Sigmoid colon (tissue), 7 donors: ENCODE measurements at regions of chr14 and their contacts with region 1.

Region 1: DNA sequence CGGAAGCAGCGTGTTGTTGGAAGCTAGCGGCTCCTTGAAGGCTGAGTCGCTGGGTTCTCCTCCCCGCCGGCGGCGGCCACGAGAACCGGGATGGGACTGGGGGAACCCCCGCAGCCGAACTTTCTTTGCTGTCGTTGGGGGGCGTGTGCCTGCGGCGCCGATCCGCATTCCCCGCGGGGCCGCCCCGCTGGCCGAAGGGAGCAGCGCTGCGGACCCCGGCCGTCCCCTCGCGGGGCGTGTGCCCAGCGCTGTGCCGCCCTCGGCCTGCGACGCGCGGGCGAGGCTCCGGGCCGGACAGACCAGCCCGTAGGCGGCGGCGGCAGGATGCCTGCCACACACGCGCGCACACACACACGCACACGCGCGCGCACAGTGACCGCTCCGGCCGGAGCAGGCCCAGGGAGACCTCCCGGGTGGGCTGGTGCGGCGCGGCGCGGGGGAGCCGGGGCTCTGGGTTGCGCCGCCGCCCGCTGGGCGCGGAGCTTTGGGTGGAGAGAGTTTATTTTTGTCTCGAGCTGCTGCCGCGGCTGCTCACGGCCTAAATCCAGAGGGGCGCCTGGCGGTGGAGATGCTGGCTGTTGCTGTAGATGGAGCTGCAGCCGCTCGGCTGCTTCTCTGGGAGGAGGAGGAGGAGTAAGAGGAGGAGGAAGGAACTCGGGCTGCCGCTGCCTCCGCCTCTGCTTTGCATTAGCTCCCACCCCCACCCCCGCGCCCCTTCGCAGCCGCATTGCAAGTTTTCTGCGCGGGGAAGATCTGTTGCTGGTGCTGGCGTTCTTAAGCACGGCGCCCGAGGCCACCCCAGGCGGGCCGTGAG is at the start of gene SAMD4A:
- DNase-seq: peak; percentile 94
- H3K4me3 ChIP-seq: peak within 1 kb of the TSS; percentile 50 to 93 (median 74)
- H3K27ac ChIP-seq: peak within 1 kb of the TSS; percentile 94 to 100 (median 98)
- H3K4me1 ChIP-seq: peaks cover 0 to 42% (median 28%) of the 10 kb centered on the region in 4 donors
- H3K27me3 ChIP-seq: no peaks in the 10 kb centered on the region
- CTCF ChIP-seq: peak in 3 of 4 experiments; percentile 21 to 47 (median 32)
- EP300 ChIP-seq: no peak
- POLR2A ChIP-seq: peak; percentile 38 to 73
- total RNA-seq, gene SAMD4A: 79.8 to 135 (median 105) TPM

Region 2: DNA sequence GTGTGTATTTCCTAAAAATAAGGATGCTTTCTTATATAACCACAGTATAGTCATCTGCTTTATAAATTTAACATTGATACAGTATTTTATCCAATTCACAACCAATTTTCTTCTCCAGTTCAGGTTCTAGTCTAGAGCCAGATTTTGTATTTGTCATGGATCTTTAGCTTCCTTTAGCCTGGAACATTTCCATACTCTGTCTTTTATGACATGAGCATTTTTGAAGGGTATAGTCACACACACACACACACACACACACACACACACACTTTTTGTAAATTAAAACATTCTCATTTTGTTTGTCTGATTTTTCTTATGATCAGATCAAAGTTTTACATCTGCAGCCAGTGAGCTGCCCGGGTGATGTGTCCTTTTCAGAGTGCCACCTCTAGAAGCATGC is 31.5 kb before region 1 on chr14:
- intact Hi-C with region 1: no loop called
- DNase-seq: no peak
- H3K4me3 ChIP-seq: no peak overlapping the region
- H3K27ac ChIP-seq: no peak overlapping the region
- H3K4me1 ChIP-seq: peaks cover 0 to 2% (median under 1%) of the 10 kb centered on the region in 4 donors
- H3K27me3 ChIP-seq: no peaks in the 10 kb centered on the region
- CTCF ChIP-seq: no peak
- EP300 ChIP-seq: no peak
- POLR2A ChIP-seq: no peak

Region 3: GRCh38 chr14:54549862-54550261 is 16.8 kb before region 1 on chr14:
- intact Hi-C with region 1: no loop called
- DNase-seq: no peak
- H3K4me3 ChIP-seq: no peak overlapping the region
- H3K27ac ChIP-seq: no peak overlapping the region
- H3K4me1 ChIP-seq: peaks cover 0 to 2% (median 0%) of the 10 kb centered on the region in 4 donors
- H3K27me3 ChIP-seq: no peaks in the 10 kb centered on the region
- CTCF ChIP-seq: no peak
- EP300 ChIP-seq: no peak
- POLR2A ChIP-seq: no peak

Region 4: DNA sequence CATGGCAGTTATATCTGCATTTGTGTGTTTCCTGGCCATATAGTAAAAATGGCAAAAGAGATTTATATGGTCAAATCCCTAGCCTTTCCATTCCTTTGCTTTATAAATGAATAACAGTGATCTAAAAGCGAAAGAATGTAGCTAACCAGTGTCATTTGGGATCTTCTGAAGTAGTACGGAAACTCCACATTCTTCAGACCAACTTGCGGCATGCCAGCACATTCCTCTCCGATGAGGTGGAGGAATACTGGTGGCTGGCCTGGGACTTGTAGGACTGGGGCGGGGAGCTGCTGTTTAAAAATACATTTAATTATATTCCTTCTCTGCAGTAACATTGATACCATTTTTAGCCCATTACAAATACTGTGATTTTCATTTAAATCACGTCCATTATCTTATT is 85.6 kb after region 1 on chr14:
- intact Hi-C with region 1: loop called (anchors 1 kb)
- DNase-seq: peak; percentile 97
- H3K4me3 ChIP-seq: peak overlapping the region; percentile 7 to 32 (median 18)
- H3K27ac ChIP-seq: peak overlapping the region; percentile 83 to 96 (median 86)
- H3K4me1 ChIP-seq: peaks cover 0 to 69% (median 60%) of the 10 kb centered on the region in 4 donors
- H3K27me3 ChIP-seq: no peaks in the 10 kb centered on the region
- CTCF ChIP-seq: no peak
- EP300 ChIP-seq: peak in 3 of 4 donors; percentile 18 to 64 (median 63)
- POLR2A ChIP-seq: no peak

Region 5: DNA sequence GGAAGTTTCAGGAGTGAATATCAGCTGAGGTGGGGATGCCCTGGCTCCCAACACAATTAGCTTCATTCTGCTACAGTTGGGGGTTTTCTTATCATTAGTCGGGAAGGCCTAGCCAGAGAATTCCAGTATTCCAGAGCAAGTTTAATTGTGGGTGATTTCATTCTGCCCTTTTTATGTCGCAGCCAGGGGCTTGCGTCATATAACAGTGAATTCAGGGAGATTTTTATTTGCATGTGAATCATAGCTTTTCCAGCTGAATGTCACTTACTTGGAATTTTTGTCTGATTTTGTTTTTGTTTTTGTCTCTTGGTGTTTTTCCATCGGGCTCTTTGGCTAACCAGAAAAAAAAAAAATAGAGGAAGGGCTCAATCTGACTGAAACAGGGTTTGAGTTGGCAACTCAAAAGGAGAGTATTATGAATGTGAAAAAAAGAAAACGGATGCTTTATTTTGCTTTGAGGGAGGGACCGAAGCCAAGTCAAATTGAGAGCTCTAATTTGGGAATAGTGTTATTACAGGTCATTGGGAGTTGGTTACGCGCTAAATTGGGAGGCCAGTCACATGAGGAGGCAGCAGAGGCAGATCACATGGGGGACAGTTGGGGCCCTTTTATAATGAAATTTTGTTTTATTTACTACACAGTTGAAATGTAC is 119.7 kb after region 1 on chr14:
- intact Hi-C with region 1: loop called (anchors 1 kb)
- DNase-seq: peak; percentile 87
- H3K4me3 ChIP-seq: no peak overlapping the region
- H3K27ac ChIP-seq: peak overlapping the region; percentile 73 to 95 (median 82)
- H3K4me1 ChIP-seq: peaks cover 0 to 78% (median 72%) of the 10 kb centered on the region in 4 donors
- H3K27me3 ChIP-seq: no peaks in the 10 kb centered on the region
- CTCF ChIP-seq: no peak
- EP300 ChIP-seq: peak in 1 of 4 donors; percentile 51
- POLR2A ChIP-seq: no peak

Region 6: DNA sequence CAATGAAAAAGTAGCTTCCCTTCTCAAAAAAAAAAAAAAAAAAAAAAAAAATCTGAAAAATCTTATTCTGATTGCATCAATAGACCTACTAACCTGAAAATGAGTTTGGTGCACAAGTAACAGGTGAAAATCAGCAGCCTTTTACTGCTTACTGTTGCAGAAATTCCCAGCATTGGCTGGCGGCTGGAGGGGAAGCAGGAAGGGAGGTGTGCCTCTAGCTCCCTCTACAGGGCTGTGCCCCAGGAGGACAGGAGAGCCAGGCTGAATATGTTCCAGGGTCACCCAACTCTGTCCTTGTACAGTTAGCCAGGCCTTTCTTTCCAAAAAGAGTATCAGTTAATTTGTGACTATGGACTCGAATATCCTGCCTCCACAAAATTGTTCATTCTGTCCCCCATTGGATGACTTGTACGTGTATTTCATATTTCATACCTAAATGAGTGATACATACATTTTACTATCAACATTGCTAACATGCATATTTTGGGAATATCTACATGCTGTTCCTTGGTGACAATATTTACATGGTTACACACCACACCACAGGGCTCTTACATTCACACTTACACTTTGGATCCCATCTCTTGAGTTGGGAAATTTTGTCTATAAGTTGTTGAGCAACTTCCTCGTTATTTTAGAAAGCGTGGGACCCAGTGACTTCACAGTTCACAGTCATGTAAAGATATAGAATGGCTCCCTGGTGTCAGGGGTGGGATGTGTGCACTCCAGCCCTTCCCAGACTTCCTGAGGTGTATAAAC is 125.1 kb after region 1 on chr14:
- intact Hi-C with region 1: loop called (anchors 1 kb)
- DNase-seq: peak; percentile 92
- H3K4me3 ChIP-seq: no peak overlapping the region
- H3K27ac ChIP-seq: peak overlapping the region; percentile 24 to 95 (median 57)
- H3K4me1 ChIP-seq: peaks cover 0 to 40% (median 36%) of the 10 kb centered on the region in 4 donors
- H3K27me3 ChIP-seq: no peaks in the 10 kb centered on the region
- CTCF ChIP-seq: peak; percentile 74 to 82 (median 82)
- EP300 ChIP-seq: no peak
- POLR2A ChIP-seq: no peak

Region 7: GRCh38 chr14:54773171-54773975 is 206.8 kb after region 1 on chr14:
- intact Hi-C with region 1: loop called (anchors 1 kb)
- DNase-seq: peak; percentile 96
- H3K4me3 ChIP-seq: no peak overlapping the region
- H3K27ac ChIP-seq: peak overlapping the region; percentile 78 to 91 (median 87)
- H3K4me1 ChIP-seq: peaks cover 0 to 71% (median 52%) of the 10 kb centered on the region in 4 donors
- H3K27me3 ChIP-seq: no peaks in the 10 kb centered on the region
- CTCF ChIP-seq: peak; percentile 53 to 91 (median 71)
- EP300 ChIP-seq: peak; percentile 24 to 96 (median 47)
- POLR2A ChIP-seq: no peak

Region 8: GRCh38 chr14:54805521-54806322 is 239.1 kb after region 1 on chr14:
- intact Hi-C with region 1: loop called (anchors 2 kb)
- DNase-seq: peak; percentile 89
- H3K4me3 ChIP-seq: peak overlapping the region in 2 of 4 donors; percentile 3 to 6
- H3K27ac ChIP-seq: no peak overlapping the region
- H3K4me1 ChIP-seq: peaks cover 0 to 8% (median 3%) of the 10 kb centered on the region in 4 donors
- H3K27me3 ChIP-seq: no peaks in the 10 kb centered on the region
- CTCF ChIP-seq: peak; percentile 66 to 94 (median 80)
- EP300 ChIP-seq: no peak
- POLR2A ChIP-seq: no peak